Transverse colon (tissue), 4 donors: ENCODE measurements at regions of chr4 and their contacts with region 1.

Region 1: GRCh38 chr4:114879916-114880669 is 233.3 kb downstream of the NDST4 start:
- DNase-seq: no peak
- H3K4me3 ChIP-seq: no peak overlapping the region
- H3K27ac ChIP-seq: no peak overlapping the region
- H3K4me1 ChIP-seq: no peaks in the 10 kb centered on the region
- H3K27me3 ChIP-seq: no peaks in the 10 kb centered on the region
- CTCF ChIP-seq: no peak
- EP300 ChIP-seq: no peak
- POLR2A ChIP-seq: no peak

Region 2: DNA sequence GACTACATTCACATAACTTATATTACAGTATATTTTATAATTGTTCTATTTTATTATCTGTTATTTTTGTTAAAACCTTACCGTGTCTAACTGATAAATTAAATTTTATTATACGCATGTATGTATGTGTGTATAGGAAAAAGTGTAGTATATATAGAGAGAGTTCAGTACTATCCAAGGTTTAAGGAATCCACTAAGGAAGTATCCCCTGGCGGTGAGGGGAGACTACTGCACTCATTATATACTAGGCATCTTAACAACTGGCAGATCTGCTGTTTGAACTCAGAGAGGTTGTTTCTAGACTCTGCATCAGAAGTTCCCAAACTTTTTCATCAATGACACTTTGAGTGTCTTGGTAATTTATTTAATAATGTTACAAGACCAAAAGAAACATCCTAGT is 162.4 kb after region 1 on chr4:
- in situ Hi-C with region 1: no loop called
- intact Hi-C with region 1: loop called (anchors 10 kb)
- DNase-seq: no peak
- H3K4me3 ChIP-seq: no peak overlapping the region
- H3K27ac ChIP-seq: no peak overlapping the region
- H3K4me1 ChIP-seq: no peaks in the 10 kb centered on the region
- H3K27me3 ChIP-seq: no peaks in the 10 kb centered on the region
- CTCF ChIP-seq: peak in 1 of 5 experiments; percentile 5
- EP300 ChIP-seq: no peak
- POLR2A ChIP-seq: no peak